ENCODE measurements at regions of chr3 and their contacts with region 1.

Region 1: GRCh38 chr3:188294823-188295487 is 141.0 kb downstream of the LPP start:
- DNase-seq: peak; percentile 82
- H3K4me3 Mint-ChIP-seq: peak overlapping the region; percentile 11
- H3K27ac Mint-ChIP-seq: peak overlapping the region; percentile 81
- H3K4me1 Mint-ChIP-seq: peaks cover 93% of the 10 kb centered on the region
- H3K27me3 Mint-ChIP-seq: no peaks in the 10 kb centered on the region
- CTCF ChIP-seq: no peak

Region 2: DNA sequence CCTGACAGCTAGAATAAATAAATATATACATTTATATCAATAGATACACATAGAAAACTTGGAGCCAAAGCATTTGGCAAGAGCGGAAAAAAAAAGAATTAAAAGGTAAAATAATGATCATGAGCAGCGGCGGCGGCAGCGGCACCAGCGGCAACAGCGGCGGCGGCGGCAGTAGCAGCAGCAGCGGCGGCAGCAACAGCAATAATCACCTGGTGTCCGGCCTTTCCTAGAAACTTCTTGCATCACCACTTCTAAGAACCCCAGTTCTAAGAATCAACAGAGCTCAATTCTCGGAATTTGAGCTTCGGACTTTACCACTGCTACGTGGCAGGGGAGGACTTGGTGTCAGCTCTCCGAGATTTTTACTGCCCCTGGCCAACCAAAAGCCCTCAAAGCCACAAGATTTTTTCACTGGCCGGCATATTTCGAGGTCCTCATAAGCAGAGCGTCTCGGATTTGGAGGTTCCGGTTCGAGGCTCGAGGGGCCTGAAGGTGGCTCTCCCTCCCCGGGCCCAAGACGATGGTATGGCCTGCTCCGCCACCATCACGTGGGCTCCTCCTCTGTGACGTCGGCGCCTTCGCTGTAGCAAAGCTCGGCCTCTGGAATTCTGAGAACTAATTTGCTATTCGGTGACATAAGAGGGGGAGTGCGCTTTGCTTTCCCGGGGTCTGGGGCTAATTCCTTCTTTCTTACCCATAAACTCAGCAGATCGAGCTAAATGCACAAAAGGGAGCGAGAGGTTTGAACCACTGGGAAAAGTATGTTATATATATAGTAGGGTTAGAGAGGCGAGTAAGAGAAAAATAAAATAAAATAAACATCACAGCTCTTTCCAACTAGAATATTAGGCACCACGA is 549.5 kb before region 1 on chr3 and contains the start of gene BCL6:
- CTCF ChIA-PET with region 1: interaction called, 21 read pairs
- intact Hi-C with region 1: loop called (anchors 1 kb)
- DNase-seq: peak; percentile 93
- H3K4me3 Mint-ChIP-seq: peak within 1 kb of the TSS; percentile 83
- H3K27ac Mint-ChIP-seq: peak within 1 kb of the TSS; percentile 89
- H3K4me1 Mint-ChIP-seq: peaks cover 54% of the 10 kb centered on the region
- H3K27me3 Mint-ChIP-seq: no peaks in the 10 kb centered on the region
- CTCF ChIP-seq: no peak
- total RNA-seq, gene BCL6: 28.3 and 35.1 TPM in 2 replicates

Region 3: GRCh38 chr3:188169830-188170455 is 125.0 kb before region 1 on chr3:
- CTCF ChIA-PET with region 1: interaction called, 3 read pairs
- intact Hi-C with region 1: loop called (anchors 5 kb)
- DNase-seq: no peak
- H3K4me3 Mint-ChIP-seq: no peak overlapping the region
- H3K27ac Mint-ChIP-seq: no peak overlapping the region
- H3K4me1 Mint-ChIP-seq: peaks cover 64% of the 10 kb centered on the region
- H3K27me3 Mint-ChIP-seq: no peaks in the 10 kb centered on the region
- CTCF ChIP-seq: no peak

Region 4: GRCh38 chr3:188248036-188248561 is 46.9 kb before region 1 on chr3:
- CTCF ChIA-PET with region 1: interaction called, 10 read pairs
- intact Hi-C with region 1: no loop called
- DNase-seq: no peak
- H3K4me3 Mint-ChIP-seq: no peak overlapping the region
- H3K27ac Mint-ChIP-seq: peak overlapping the region; percentile 37
- H3K4me1 Mint-ChIP-seq: peaks cover 73% of the 10 kb centered on the region
- H3K27me3 Mint-ChIP-seq: no peaks in the 10 kb centered on the region
- CTCF ChIP-seq: no peak

Region 5: GRCh38 chr3:188323067-188323842 is 28.3 kb after region 1 on chr3:
- CTCF ChIA-PET with region 1: interaction called, 10 read pairs
- intact Hi-C with region 1: no loop called
- DNase-seq: no peak
- H3K4me3 Mint-ChIP-seq: no peak overlapping the region
- H3K27ac Mint-ChIP-seq: no peak overlapping the region
- H3K4me1 Mint-ChIP-seq: peaks cover 27% of the 10 kb centered on the region
- H3K27me3 Mint-ChIP-seq: no peaks in the 10 kb centered on the region
- CTCF ChIP-seq: no peak

Region 6: DNA sequence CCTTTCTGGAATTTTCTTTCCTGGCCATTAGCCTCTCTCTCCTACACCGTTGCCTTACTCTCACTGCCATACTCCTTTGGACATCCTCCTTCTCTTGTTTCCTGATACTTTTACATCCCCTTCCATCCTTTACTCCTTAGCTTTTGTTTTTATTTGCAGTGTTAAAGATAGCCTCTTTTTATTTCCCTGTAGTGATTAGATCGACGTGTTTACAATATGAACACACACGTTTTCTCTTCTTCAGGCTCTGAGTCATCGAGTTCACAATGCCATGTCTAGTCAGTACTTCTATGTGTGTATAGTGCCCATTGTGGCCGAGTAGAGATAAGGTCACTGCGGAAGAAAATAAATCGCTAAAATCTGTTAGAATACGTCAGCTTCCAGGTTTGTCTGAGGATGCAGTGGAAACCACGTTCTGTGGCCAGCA is 67.5 kb after region 1 on chr3:
- CTCF ChIA-PET with region 1: interaction called, 7 read pairs
- intact Hi-C with region 1: loop called (anchors 5 kb)
- DNase-seq: peak; percentile 66
- H3K4me3 Mint-ChIP-seq: peak overlapping the region; percentile 0
- H3K27ac Mint-ChIP-seq: peak overlapping the region; percentile 23
- H3K4me1 Mint-ChIP-seq: peaks cover 44% of the 10 kb centered on the region
- H3K27me3 Mint-ChIP-seq: no peaks in the 10 kb centered on the region
- CTCF ChIP-seq: no peak

Region 7: GRCh38 chr3:188947401-188948280 is 652.7 kb after region 1 on chr3:
- CTCF ChIA-PET with region 1: interaction called, 5 read pairs
- intact Hi-C with region 1: loop called (anchors 2 kb)
- DNase-seq: peak; percentile 94
- H3K4me3 Mint-ChIP-seq: peak overlapping the region; percentile 62
- H3K27ac Mint-ChIP-seq: peak overlapping the region; percentile 90
- H3K4me1 Mint-ChIP-seq: peaks cover 42% of the 10 kb centered on the region
- H3K27me3 Mint-ChIP-seq: no peaks in the 10 kb centered on the region
- CTCF ChIP-seq: peak; percentile 75